ENCODE measurements at regions of chr6 and their contacts with region 1.

Region 1: DNA sequence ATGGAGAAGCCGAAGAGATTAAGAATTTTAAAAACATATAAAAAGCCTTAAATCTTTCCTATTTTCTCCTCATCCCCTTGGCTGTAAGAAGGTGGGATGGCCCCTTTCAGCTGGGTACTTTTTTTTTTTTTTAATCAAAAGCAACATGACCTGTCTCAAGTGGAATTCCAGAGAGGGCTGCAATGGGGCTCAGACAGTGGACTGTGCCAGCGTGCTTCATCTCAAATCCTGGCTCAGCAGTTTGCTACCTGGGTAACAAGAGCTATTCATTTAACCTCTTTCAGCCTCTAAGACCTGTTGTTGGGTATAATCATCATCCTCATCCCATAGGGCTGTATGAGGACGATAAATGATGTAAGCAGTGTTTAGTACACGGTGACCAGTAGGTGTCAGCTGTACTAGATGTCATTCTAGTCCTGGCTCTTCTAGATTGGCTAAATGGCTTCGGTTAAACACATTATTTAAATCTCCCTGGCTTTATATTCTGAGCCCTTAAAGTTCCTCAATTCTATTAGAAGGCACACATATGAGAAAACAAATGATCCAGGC is 6.9 kb upstream of the PPP1R3G start:
- H3K4me3 ChIP-seq: no peak overlapping the region
- H3K27ac ChIP-seq: no peak overlapping the region
- H3K4me1 ChIP-seq: no peaks in the 10 kb centered on the region
- CTCF ChIP-seq: no peak

Region 2: DNA sequence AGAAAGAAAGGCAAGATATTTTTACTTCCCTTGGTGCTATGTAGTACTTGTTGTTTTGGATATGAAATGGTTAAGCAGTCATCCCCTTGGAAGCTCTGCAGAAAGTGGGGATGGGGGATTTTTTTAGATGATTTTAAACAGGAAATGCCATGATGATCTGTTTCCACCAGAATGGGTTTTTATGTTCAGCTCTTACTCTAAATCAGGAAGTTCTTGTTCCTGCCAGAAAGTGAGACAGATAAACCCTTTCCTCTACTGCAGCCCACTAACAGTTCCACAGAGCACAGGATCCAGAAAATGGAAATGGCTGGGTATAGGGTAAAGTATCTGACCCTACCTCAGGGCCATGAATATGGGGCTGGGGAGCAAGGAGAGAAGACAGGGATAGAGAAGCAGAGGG is 25.2 kb before region 1 on chr6:
- CTCF ChIA-PET with region 1: interaction called, 12 read pairs
- POLR2A ChIA-PET with region 1: interaction called, 3 read pairs
- H3K4me3 ChIP-seq: no peak overlapping the region
- H3K27ac ChIP-seq: no peak overlapping the region
- H3K4me1 ChIP-seq: no peaks in the 10 kb centered on the region
- CTCF ChIP-seq: no peak